HEK293T (cell line): ENCODE measurements at regions of chr16 and their contacts with region 1.

Region 1: GRCh38 chr16:2919511-2920255 is 8.0 kb downstream of the FLYWCH1 start:
- DNase-seq: peak; percentile 58

Region 2: GRCh38 chr16:2838928-2839327 is 80.8 kb before region 1 on chr16:
- CTCF ChIA-PET with region 1: interaction called, 14 read pairs
- POLR2A ChIA-PET with region 1: no interaction called
- DNase-seq: peak; percentile 75

Region 3: DNA sequence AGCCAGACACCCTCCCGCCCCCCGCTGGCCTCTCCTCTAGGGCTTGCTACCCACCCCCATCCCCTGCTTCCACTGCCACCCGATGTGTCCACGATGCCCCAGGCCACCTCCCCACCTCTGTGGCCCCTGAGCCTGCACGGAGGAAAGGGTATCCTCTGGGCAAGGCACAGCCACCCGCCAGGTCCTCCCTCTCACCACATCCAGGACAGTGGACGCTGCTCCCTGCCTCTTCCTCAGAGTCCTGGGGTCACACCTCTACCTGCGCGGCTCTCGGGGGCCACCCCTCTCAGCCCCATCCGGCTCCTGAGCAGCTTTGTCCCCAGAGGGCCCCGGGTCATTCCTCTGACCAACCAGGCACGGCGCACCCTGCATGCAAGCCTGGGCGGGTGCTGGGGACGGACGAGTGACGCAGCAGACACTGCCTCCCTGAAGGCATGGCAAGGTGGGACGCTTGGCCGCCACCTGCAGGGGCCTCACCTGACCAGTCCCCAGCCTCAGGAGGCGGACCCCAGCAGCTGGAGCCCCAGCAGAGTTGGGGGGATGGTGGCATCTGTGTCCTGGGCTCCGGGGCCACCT is 16.8 kb after region 1 on chr16:
- CTCF ChIA-PET with region 1: no interaction called
- POLR2A ChIA-PET with region 1: no interaction called
- DNase-seq: no peak

Region 4: GRCh38 chr16:2966589-2967191 is 47.0 kb after region 1 on chr16:
- CTCF ChIA-PET with region 1: no interaction called
- POLR2A ChIA-PET with region 1: no interaction called
- DNase-seq: no peak